ENCODE measurements at regions of chr19 and their contacts with region 1.

Region 1: DNA sequence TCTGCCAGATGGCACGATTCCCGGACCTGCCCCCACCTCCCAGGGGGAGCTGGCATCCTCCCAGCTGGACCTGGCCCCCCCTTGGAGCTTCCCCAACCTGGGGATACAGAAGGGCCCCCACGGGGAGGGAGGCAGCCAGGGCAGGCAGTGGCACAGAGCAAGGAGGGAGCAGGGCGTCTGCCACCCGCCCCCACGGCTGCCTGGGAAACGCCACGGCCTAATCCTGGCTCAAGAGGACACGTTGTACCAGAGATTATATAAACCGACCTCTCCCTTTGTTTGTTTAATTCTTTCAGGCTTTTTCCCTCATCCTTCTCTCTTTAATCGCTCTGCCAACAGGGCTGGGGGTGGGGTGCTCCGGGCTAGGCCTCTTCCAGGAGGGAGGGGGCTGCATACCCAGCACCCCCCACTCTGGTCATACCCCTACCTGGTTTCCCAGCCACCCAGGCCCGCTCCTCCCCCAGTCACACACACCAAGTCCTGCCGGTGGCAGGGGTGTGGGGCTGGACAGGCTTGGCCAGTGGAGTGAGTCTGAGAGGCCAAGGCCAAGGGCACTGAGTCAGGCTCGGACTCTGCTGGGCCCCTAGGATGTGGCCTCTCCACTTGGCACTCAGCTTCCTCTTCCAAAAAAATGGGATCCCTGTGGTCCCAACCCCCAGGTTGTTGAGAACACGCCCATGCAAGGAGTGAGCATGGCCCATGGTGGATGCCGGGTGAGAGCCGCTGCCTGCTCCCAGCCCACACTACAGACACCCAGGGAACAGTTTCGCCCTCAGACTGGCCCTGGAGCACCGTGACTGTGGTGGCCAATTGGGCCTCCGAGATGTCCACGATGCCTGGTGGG is 29.5 kb upstream of the NFIC start:
- DNase-seq: no peak
- ATAC-seq: no peak
- H3K4me3 ChIP-seq: no peak overlapping the region
- H3K4me3 Mint-ChIP-seq: no peak overlapping the region
- H3K27ac ChIP-seq: no peak overlapping the region
- H3K27ac Mint-ChIP-seq: peak overlapping the region; percentile 49
- H3K4me1 ChIP-seq: peaks cover 22% of the 10 kb centered on the region
- H3K4me1 Mint-ChIP-seq: peaks cover 11% of the 10 kb centered on the region
- H3K27me3 ChIP-seq: no peaks in the 10 kb centered on the region
- H3K27me3 Mint-ChIP-seq: no peaks in the 10 kb centered on the region
- CTCF ChIP-seq: no peak

Region 2: DNA sequence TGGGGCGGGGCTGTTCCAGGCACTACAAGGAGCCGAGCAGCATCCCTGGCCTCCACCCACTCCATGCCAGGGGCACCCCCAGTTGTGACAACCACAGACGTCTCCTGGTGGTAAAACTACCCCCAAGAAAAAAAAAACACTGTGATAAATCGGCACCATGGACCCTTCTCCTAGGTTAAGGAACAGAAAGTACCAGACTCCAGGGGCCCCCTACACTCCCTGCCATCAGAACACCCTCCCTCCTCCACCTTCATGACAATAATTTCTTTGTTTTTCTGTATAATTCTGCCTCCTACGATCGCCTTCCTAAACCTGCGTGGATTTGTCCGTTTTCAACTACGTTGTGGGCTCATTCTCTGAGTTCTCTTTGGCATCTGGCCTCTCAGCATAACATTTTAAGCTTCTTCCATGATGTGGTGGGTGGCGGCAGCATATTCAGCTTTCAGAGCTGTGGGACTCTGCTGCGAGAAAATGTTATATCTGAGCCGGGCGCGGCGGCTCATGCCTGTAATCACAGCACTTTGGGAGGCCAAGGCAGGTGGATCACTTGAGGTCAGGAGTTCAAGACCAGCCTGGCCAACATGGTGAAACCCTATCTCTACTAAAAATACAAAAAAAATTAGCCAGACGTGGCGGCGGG is 316.5 kb before region 1 on chr19:
- CTCF ChIA-PET with region 1: no interaction called
- POLR2A ChIA-PET with region 1: no interaction called
- intact Hi-C with region 1: no loop called
- DNase-seq: no peak
- ATAC-seq: no peak
- H3K4me3 ChIP-seq: no peak overlapping the region
- H3K4me3 Mint-ChIP-seq: no peak overlapping the region
- H3K27ac ChIP-seq: no peak overlapping the region
- H3K27ac Mint-ChIP-seq: no peak overlapping the region
- H3K4me1 ChIP-seq: peaks cover 12% of the 10 kb centered on the region
- H3K4me1 Mint-ChIP-seq: peaks cover 12% of the 10 kb centered on the region
- H3K27me3 ChIP-seq: no peaks in the 10 kb centered on the region
- H3K27me3 Mint-ChIP-seq: no peaks in the 10 kb centered on the region
- CTCF ChIP-seq: no peak

Region 3: GRCh38 chr19:3314962-3315675 is 21.8 kb before region 1 on chr19:
- CTCF ChIA-PET with region 1: no interaction called
- POLR2A ChIA-PET with region 1: no interaction called
- intact Hi-C with region 1: no loop called
- DNase-seq: no peak
- ATAC-seq: no peak
- H3K4me3 ChIP-seq: no peak overlapping the region
- H3K4me3 Mint-ChIP-seq: no peak overlapping the region
- H3K27ac ChIP-seq: no peak overlapping the region
- H3K27ac Mint-ChIP-seq: no peak overlapping the region
- H3K4me1 ChIP-seq: no peaks in the 10 kb centered on the region
- H3K4me1 Mint-ChIP-seq: no peaks in the 10 kb centered on the region
- H3K27me3 ChIP-seq: peaks cover 10 to 16% of the 10 kb centered on the region in 2 experiments
- H3K27me3 Mint-ChIP-seq: peaks cover 36% of the 10 kb centered on the region
- CTCF ChIP-seq: no peak

Region 4: DNA sequence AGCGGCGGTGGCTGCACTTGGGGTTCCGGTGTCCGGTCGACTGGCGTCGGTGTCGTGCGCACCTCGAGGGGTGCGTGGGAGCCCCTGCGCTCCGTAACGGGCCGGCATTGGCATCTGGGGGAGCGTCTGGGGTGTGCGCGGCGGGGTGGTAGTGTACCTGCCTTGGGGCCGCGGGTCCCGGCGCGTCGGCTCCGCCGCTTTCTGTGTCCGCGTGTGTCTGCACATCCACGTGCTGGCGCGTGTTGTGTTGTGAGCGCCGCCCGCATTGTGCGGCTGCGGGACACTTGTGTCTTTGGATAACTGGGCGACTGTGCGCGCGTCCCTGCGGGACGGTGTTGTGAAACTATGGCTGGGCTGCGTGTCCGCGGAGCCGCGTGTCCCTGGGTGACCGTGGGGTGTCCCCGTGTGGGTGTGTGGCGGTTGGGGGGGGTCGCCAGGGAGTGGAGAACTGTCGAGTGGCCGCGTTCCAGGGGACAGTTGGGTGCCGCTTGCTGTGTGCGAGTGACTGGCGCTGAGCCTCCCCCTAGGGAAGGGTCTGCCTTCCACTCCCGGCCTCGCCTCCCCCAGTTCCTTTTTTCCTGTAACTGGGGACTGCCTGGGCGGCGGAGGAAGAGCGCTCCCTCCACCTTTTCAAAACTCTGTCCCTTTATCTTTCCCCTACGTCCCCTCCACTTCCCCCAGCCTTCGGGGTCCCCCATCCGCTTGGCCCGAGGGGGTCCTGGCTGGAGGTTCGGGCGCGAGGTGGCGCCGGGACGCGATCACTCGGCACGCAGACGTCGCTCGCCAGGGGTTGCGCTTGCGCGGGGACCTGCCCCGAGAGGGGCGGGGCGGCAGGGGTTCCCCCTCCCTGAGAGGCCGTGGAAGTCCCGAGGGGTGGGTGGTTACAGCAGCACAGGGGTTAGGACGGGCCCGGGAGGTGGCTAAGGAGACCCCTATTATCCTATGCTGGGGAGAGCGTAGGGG is 23.8 kb after region 1 on chr19:
- CTCF ChIA-PET with region 1: no interaction called
- POLR2A ChIA-PET with region 1: interaction called, 15 read pairs
- intact Hi-C with region 1: loop called (anchors 2 kb)
- DNase-seq: peak; percentile 48 to 91 (median 72)
- ATAC-seq: peak; percentile 53
- H3K4me3 ChIP-seq: peak overlapping the region; percentile 76
- H3K4me3 Mint-ChIP-seq: peak overlapping the region; percentile 89
- H3K27ac ChIP-seq: peak overlapping the region; percentile 52 to 60
- H3K27ac Mint-ChIP-seq: peak overlapping the region; percentile 78
- H3K4me1 ChIP-seq: peaks cover 50% of the 10 kb centered on the region
- H3K4me1 Mint-ChIP-seq: peaks cover 55% of the 10 kb centered on the region
- H3K27me3 ChIP-seq: no peaks in the 10 kb centered on the region
- H3K27me3 Mint-ChIP-seq: no peaks in the 10 kb centered on the region
- CTCF ChIP-seq: no peak

Region 5: GRCh38 chr19:3505598-3506383 is 168.9 kb after region 1 on chr19 and contains the start of gene FZR1:
- CTCF ChIA-PET with region 1: no interaction called
- POLR2A ChIA-PET with region 1: no interaction called
- intact Hi-C with region 1: no loop called
- DNase-seq: peak; percentile 98 to 100 (median 100)
- ATAC-seq: peak; percentile 85
- H3K4me3 ChIP-seq: peak within 1 kb of the TSS; percentile 91
- H3K4me3 Mint-ChIP-seq: peak within 1 kb of the TSS; percentile 95
- H3K27ac ChIP-seq: peak within 1 kb of the TSS; percentile 85 to 96
- H3K27ac Mint-ChIP-seq: peak within 1 kb of the TSS; percentile 95
- H3K4me1 ChIP-seq: peaks cover 53% of the 10 kb centered on the region
- H3K4me1 Mint-ChIP-seq: peaks cover 48% of the 10 kb centered on the region
- H3K27me3 ChIP-seq: no peaks in the 10 kb centered on the region
- H3K27me3 Mint-ChIP-seq: no peaks in the 10 kb centered on the region
- CTCF ChIP-seq: no peak
- total RNA-seq, gene FZR1: 109 to 116 TPM

Measured in CD4-positive, alpha-beta T cell (primary cell).